Stomach (tissue), 19 donors: ENCODE measurements at regions of chr11 and their contacts with region 1.

Region 1: GRCh38 chr11:10400856-10401255 is 54.2 kb upstream of the AMPD3 start:
- DNase-seq: no peak
- H3K4me3 ChIP-seq: no peak overlapping the region
- H3K27ac ChIP-seq: peak overlapping the region in 1 of 5 donors; percentile 23
- H3K4me1 ChIP-seq: peaks cover 0 to 5% (median under 1%) of the 10 kb centered on the region in 4 donors
- H3K27me3 ChIP-seq: no peaks in the 10 kb centered on the region
- CTCF ChIP-seq: no peak
- EP300 ChIP-seq: no peak
- POLR2A ChIP-seq: no peak

Region 2: DNA sequence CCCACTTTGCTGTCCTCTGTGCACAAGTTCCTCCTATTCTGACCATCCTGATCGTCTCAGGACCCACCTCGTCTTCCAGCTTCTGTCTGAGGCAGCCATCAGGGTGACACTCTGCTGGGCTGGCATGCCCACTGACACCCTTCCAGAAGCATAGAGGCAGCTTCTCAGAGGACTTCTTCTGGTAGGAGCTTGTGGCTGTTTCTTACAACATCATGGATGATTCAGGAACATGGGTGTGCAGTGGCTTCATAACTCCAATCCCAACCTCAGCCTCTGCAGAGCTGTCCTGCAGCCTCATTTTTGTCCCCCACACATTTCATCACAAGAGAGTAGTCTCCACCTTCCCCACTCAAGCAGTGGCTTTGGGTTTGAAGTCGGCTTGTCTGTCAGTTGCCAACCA is 329.3 kb after region 1 on chr11:
- intact Hi-C with region 1: loop called (anchors 5 kb)
- DNase-seq: no peak
- H3K4me3 ChIP-seq: no peak overlapping the region
- H3K27ac ChIP-seq: peak overlapping the region in 1 of 5 donors; percentile 5
- H3K4me1 ChIP-seq: peaks cover 0 to 6% (median 2%) of the 10 kb centered on the region in 4 donors
- H3K27me3 ChIP-seq: peaks cover 0 to 6% (median 0%) of the 10 kb centered on the region in 3 donors
- CTCF ChIP-seq: no peak
- EP300 ChIP-seq: no peak
- POLR2A ChIP-seq: no peak